Activated CD4-positive, alpha-beta memory T cell treated with anti-CD3 and anti-CD28 coated beads, Interleukin-2, amount 10 ng/mL, durations not matched to agents 7 days and 5 days (primary cell): ENCODE measurements at regions of chr10 and their contacts with region 1.

Region 1: DNA sequence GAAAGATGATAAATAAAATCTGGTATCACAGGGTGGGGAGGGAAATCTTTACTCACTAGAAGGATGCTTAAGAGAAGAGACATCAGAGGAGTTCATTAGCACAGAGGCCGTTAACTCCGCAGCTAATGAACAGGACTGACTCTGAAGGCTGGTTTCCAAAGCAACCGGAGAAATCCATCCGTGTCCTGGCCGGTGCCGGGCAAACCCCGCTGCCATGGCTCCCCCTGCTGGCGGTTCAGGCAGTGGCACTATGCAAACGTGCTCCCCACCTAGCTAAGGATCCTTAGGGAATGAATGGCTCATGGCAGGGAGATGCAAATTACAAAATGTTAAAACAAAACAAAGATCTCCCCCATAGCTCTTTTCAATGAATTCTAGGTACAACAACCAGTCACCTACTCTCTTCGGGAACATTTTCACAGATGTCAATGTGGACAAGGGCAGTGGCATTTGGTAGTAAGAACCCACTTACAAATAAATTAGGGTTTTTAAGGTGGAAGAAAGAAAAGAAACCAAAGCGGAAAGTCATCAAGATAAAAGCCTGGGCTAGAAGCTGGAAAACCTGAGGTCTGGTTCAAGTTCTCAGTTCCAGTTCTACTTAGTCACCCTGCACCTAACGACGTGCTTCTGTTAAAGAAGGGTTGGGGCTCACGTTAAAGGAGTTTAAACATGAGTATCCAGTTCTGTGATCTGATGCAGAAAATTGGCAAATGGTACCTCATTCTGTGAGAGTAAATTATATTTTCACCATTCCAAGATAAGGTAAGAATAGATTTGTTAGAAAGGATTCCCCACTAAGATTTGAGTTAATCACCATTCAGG is 138.2 kb downstream of the SVIL start:
- DNase-seq: peak; percentile 63
- H3K4me3 Mint-ChIP-seq: no peak overlapping the region
- H3K27ac Mint-ChIP-seq: no peak overlapping the region
- H3K4me1 Mint-ChIP-seq: no peaks in the 10 kb centered on the region
- H3K27me3 Mint-ChIP-seq: no peaks in the 10 kb centered on the region

Region 2: GRCh38 chr10:29482591-29483431 is 13.7 kb before region 1 on chr10:
- CTCF ChIA-PET with region 1: interaction called, 13 read pairs
- POLR2A ChIA-PET with region 1: no interaction called
- DNase-seq: peak; percentile 54
- H3K4me3 Mint-ChIP-seq: no peak overlapping the region
- H3K27ac Mint-ChIP-seq: peak overlapping the region; percentile 24
- H3K4me1 Mint-ChIP-seq: peaks cover 35% of the 10 kb centered on the region
- H3K27me3 Mint-ChIP-seq: no peaks in the 10 kb centered on the region

Region 3: DNA sequence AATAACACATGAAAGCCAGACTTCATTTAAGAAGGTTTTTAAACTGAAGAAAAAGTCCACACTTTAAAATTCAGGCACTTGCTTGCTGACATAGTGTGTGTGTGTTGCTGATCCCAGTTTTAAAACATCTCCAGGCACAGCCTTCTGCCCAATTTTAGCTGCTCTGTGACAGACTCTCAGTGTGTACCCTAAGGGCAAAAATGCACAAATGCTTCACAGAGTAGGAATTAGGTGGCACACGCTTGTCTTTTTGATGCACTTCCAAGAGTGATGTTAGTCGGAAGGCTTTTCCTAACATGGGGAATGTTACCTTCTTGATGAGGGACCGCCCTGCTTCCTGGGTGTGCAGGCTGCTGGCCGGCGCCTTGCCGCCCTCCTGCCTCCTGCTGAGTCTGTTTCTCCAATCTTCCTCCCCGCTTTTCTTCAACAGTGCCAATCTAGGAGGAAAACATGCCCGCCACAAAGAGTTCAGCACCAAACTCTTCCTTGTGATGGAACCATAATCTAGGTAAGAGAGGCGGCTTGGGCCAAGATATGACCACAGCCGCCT is 15.9 kb after region 1 on chr10:
- CTCF ChIA-PET with region 1: interaction called, 11 read pairs
- POLR2A ChIA-PET with region 1: no interaction called
- DNase-seq: no peak
- H3K4me3 Mint-ChIP-seq: no peak overlapping the region
- H3K27ac Mint-ChIP-seq: no peak overlapping the region
- H3K4me1 Mint-ChIP-seq: no peaks in the 10 kb centered on the region
- H3K27me3 Mint-ChIP-seq: no peaks in the 10 kb centered on the region